Left cardiac atrium (tissue), 4 donors: ENCODE measurements at regions of chr2 and their contacts with region 1.

Region 1: GRCh38 chr2:203909261-203909967 is 27.1 kb upstream of the ICOS start:
- DNase-seq: no peak
- ATAC-seq: peak; percentile 81 to 85

Region 2: DNA sequence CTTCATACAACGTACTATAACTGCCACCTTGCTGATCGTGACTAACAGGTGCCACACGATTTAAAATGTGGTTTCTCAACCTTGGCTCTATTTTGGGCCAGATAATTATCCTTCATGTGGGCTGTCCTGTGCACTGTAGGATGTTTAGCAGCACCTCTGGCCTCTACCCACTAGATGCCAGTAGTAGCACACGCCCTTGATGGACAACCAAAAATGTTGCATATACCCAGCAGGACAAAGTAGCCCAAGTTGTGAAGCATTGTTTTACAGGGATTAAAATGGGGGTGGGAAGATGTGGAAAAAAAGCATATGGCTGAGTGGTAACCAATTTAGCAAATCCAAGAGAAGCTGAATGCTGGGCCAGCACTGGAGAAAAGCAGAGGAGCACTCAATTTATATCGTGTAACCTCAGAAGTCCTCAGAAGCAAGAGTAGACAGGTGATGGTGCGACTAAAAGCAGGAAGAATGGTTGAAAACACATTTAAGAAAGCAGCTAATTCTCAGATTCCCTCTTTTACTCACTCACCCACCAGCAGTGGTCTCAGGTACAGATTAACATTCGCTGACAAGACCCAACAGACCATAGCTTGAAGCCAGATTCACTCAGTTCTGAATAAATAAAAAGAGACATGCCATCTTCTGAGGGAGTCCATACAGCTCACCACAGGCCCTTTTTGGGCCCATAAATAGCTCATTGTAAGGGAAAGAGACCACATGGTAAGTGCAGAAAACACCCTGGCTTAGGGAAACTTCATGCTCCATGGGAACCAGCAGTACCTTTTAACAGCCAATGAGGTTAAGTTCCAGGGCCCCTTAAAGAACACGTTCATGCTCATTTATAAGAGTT is 424.9 kb before region 1 on chr2:
- intact Hi-C with region 1: loop called in 1 of 2 experiments (anchors 10 kb)
- DNase-seq: no peak
- ATAC-seq: peak; percentile 84 to 92

Region 3: DNA sequence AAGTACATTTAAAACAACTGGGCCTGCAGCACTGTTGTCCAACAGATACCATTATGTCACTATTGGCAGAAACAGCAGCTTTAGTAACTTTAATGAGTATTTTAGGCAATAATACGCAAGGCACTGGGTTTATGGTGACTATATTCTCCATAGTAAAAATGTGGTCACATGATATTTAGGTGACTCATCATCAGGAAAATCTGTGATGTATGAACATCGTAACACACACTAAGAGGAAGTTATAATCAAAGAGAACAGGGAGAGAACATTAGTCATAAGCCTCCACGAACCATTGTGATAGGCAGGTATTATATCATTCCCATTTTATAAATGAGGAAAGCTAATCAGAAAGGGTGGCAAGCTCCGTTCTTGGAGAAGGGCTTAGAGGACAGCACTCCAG is 411.3 kb before region 1 on chr2:
- intact Hi-C with region 1: loop called in 1 of 2 experiments (anchors 10 kb)
- DNase-seq: no peak
- ATAC-seq: peak in 1 of 2 donors; percentile 79

Region 4: GRCh38 chr2:204060841-204061240 is 151.4 kb after region 1 on chr2:
- intact Hi-C with region 1: no loop called
- DNase-seq: no peak
- ATAC-seq: no peak